Activated CD4-positive, alpha-beta T cell treated with anti-CD3 and anti-CD28 coated beads, Interleukin-2, amount 10 ng/mL, durations not matched to agents 24 days and 14 days (primary cell): ENCODE measurements at regions of chr21 and their contacts with region 1.

Region 1: GRCh38 chr21:34129039-34129891 is 55.9 kb downstream of the MRPS6 start:
- DNase-seq: peak; percentile 92
- H3K4me3 Mint-ChIP-seq: peak overlapping the region; percentile 77
- H3K27ac Mint-ChIP-seq: peak overlapping the region; percentile 95
- H3K4me1 Mint-ChIP-seq: peaks cover 77% of the 10 kb centered on the region
- H3K27me3 Mint-ChIP-seq: no peaks in the 10 kb centered on the region

Region 2: DNA sequence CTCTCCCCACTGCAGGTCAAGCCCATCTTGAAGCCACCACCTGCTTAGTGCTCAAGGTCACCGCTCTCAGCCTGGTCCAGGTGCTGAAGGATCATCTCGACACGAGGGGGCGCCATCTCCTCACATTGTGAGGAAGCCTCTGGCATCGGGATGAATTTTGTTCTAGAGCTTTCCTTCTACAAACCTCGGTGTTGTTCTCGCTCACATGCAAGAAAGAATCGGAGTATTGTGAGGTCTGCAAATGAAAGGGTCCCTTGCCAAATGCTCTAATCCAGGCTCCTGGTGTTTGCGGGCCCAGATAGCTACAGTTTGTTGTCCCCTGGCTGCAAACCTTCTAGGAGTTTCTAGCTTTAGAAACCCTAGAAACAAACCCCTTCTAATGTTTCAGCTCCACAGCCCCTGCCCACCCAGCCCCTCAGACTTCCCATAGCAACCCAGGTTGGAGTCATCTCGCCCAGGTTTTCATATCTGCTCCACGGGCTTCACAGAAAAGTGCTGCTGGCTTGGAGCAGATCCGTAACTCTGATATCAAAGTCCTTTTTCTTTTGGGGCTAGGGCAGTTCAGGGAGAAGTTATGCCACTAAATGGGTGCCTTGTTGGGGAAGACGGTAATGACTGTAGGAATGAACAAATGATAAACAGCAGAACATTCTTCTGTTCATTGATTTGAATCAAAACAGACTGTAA is 205.0 kb before region 1 on chr21:
- intact Hi-C with region 1: loop called (anchors 2 kb)
- DNase-seq: peak; percentile 97
- H3K4me3 Mint-ChIP-seq: no peak overlapping the region
- H3K27ac Mint-ChIP-seq: no peak overlapping the region
- H3K4me1 Mint-ChIP-seq: peaks cover 13% of the 10 kb centered on the region
- H3K27me3 Mint-ChIP-seq: no peaks in the 10 kb centered on the region

Region 3: DNA sequence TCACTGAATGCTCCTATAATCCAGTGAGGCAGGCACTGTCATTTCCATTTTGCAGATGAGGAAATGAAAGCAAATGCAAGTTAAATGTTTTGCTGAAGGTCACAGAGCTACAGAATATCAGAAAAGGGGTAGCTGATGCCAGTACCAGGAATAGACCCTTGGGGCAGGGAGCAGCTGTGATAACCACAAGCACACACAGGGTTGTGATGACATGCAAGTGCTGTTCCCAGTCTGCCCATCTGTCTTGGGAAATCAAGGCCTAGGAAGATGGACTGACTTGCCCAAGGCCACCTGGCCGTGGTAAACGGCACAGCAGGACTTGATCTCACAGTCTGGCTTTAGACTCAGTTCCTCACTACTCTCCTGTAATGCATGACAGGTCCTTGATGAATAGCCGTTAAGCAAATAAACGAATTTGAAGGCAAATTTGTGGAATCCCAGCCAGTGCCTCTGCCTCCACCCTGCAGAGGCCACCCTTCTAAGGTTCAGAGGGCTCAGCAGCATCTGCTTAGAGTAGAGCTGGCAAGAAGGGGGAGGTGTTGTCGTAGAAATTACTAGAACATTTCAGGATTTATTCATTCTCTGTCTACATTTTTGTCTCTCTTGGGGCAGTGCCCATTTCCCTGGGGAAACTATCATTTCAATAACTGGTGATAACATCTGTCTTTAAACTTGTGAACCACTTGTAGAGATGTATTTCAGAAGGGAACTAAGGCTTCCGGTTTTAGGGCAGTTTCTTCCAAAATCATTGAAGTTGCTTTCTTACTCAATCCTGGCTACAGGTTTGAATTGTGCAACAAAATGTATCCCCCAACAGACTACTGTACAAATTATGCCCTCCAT is 109.0 kb before region 1 on chr21:
- intact Hi-C with region 1: loop called (anchors 5 kb)
- DNase-seq: no peak
- H3K4me3 Mint-ChIP-seq: peak overlapping the region; percentile 41
- H3K27ac Mint-ChIP-seq: peak overlapping the region; percentile 34
- H3K4me1 Mint-ChIP-seq: peaks cover 30% of the 10 kb centered on the region
- H3K27me3 Mint-ChIP-seq: no peaks in the 10 kb centered on the region

Region 4: GRCh38 chr21:34105947-34106541 is 23.2 kb before region 1 on chr21:
- intact Hi-C with region 1: loop called (anchors 1 kb)
- DNase-seq: no peak
- H3K4me3 Mint-ChIP-seq: no peak overlapping the region
- H3K27ac Mint-ChIP-seq: no peak overlapping the region
- H3K4me1 Mint-ChIP-seq: peaks cover 40% of the 10 kb centered on the region
- H3K27me3 Mint-ChIP-seq: no peaks in the 10 kb centered on the region

Region 5: DNA sequence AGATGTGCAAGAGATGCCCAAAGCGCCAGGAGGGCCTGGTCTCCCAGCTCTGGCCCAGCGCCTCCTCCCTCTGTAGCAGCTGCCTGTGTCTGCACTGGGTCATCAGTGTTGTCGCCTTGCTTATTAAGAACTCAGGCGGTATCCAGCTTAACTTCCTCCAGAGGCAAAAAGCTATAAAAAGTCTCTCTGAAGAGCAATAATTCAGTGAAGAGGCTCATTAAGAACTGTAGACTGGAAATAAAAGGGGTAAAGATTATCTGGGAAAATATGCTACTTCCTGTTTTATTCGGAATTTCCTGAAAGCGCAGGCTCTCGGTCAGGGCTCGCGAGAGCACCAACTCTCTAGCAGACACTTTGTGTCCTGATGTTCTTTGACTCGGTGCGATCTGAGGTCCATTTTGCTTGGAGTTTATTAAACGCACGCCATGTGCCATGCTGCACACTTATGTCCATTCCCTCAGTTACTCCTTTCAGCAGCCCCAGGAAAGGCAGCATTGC is 14.5 kb after region 1 on chr21:
- intact Hi-C with region 1: no loop called
- DNase-seq: no peak
- H3K4me3 Mint-ChIP-seq: no peak overlapping the region
- H3K27ac Mint-ChIP-seq: no peak overlapping the region
- H3K4me1 Mint-ChIP-seq: peaks cover 11% of the 10 kb centered on the region
- H3K27me3 Mint-ChIP-seq: no peaks in the 10 kb centered on the region

Region 6: DNA sequence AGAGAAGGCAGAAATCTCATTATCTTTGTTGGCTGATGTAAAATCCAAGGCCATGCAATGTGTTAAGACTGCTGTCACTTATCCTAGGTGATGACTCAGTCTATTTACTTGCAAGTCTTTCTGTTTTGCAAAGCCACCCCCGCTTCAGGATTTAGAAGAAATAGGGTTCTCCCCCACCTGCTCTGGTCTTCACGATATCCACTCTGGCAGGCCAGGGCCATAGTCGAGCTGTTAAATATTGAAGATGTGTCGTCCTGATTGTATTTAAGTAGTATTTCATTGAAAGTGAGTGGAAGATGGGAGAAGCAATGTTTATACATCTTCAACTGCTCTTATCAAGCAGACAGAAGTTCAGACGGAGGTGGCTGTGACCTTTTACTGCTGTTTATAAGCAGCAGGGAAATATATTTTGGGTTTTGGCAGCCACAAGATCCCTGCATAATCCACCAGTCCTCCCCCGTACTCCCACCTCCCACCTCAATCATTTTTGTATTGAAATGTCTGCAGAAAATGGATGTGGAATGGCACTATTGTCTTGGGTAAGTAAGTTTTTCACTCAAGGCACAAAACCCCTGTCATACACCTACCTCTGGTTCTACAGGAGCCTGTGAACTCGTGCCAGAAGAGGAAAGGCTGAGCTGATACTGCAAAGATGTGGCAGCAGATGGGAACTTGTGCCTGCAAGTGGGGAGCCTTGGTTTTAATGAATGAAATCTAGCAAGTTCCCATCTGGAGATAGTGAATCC is 61.5 kb after region 1 on chr21:
- intact Hi-C with region 1: loop called (anchors 1 kb)
- DNase-seq: peak; percentile 58
- H3K4me3 Mint-ChIP-seq: peak overlapping the region; percentile 46
- H3K27ac Mint-ChIP-seq: peak overlapping the region; percentile 88
- H3K4me1 Mint-ChIP-seq: peaks cover 35% of the 10 kb centered on the region
- H3K27me3 Mint-ChIP-seq: no peaks in the 10 kb centered on the region

Region 7: GRCh38 chr21:34276711-34277425 is 147.6 kb after region 1 on chr21:
- intact Hi-C with region 1: loop called (anchors 5 kb)
- DNase-seq: peak; percentile 66
- H3K4me3 Mint-ChIP-seq: no peak overlapping the region
- H3K27ac Mint-ChIP-seq: peak overlapping the region; percentile 54
- H3K4me1 Mint-ChIP-seq: peaks cover 7% of the 10 kb centered on the region
- H3K27me3 Mint-ChIP-seq: peaks cover 8% of the 10 kb centered on the region